Sciatic nerve (tissue), 2 donors: ENCODE measurements at regions of chr2 and their contacts with region 1.

Region 1: GRCh38 chr2:180071797-180072196 is 64.7 kb upstream of the CWC22 start:
- DNase-seq: no peak
- ATAC-seq: no peak

Region 2: DNA sequence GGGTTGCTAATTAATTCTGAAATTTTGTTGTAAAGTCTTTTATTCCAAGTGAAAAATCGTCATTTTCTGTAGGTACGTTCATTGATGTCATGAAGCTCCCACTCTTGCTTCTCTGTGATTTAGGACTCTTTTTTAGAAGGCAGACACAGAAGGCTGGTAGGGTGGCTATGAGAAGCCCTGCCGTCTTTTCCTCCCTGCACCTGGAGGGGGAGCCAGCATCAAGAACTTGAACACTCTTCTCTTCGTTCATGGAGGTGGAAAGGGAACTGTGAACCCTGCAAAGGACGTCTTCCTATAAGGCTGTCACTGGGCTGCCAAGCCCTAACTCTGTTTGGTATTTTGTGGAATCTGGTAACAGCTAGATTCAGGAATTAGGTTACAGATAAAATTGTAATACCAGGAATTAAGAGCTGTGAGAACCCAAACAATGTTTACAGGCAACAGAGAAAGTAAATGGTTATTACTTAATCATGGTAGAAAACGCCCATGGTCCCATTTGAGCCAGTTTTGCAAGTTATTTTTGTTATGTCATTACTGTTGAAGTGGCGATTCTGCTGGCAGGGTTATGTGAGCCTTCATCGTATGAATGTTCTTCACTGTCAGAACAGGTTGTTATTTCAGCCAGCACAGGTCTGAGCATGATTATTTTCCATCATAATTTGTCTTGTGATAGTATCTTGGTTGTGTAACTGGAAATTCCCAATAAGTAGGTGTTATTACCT is 1765.3 kb before region 1 on chr2:
- intact Hi-C with region 1: no loop called
- DNase-seq: no peak
- ATAC-seq: peak; percentile 39

Region 3: GRCh38 chr2:179435000-179435399 is 636.8 kb before region 1 on chr2:
- intact Hi-C with region 1: loop called (anchors 5 kb)
- DNase-seq: no peak
- ATAC-seq: no peak

Region 4: DNA sequence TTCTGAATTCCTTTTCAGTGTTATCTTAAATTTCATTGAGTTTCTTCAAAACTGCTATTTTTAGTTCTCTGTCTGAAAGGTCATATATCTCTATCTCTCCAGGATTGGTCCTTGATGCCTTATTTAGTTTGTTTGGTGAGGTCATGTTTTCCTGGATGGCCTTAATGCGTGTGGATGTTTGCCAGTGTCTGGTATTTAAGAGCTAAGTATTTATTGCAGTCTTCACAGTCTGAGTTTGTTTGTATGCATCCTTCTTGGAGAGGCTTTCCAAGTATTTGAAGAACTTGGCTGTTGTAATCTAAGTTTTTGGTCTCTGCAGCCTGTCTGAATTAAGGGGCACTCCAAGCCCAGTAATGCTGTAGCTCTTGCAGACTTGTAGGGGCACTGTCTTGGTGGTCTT is 459.7 kb before region 1 on chr2:
- intact Hi-C with region 1: no loop called
- DNase-seq: no peak
- ATAC-seq: no peak